ENCODE measurements at regions of chr16 and their contacts with region 1.

Region 1: DNA sequence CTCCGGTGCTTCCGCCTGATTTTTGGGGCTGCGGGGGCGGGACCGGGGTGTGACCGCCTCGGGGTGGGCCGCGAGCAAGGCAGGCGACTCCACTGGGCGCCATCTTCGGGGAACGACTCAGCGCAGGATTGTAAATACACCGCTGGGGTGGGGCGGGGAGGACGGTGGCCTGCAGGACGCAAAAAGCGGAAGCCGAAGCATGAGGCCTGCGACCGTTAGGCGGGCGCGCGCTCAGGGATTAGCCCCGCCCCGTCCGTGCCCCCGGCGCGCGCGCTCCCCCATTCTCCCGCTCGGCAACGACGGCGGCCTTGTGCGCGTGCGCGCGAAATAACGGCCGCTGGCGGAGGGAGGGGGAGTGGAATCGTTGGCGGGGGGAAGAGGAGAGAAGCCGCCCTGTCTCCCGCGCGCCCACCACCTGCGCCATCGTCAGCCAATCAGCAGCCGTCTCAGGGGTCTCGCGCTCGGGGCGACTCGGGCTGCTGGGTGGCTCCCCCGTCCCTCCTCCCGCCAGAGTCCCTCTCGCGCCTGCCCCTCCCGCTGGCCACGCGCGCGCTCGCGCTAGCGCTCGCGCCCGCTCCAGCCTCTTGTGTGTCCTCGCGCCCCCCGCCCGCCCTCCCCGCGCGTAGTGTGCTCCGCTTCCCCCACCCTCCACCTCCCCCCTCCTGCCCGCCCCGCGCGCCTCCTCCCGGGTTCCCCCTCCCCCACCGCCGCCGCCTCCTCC is 791 bp upstream of the MAZ start:
- DNase-seq: peak; percentile 97 to 99 (median 98)
- H3K4me3 ChIP-seq: peak overlapping the region; percentile 43 to 95
- H3K4me3 Mint-ChIP-seq: peak overlapping the region; percentile 99 to 100 (median 100)
- H3K27ac ChIP-seq: peak overlapping the region; percentile 86
- H3K27ac Mint-ChIP-seq: peak overlapping the region; percentile 98 to 100 (median 99)
- H3K4me1 ChIP-seq: peaks cover 46% of the 10 kb centered on the region
- H3K4me1 Mint-ChIP-seq: peaks cover 26 to 53% (median 37%) of the 10 kb centered on the region in 4 donors
- H3K27me3 ChIP-seq: no peaks in the 10 kb centered on the region
- H3K27me3 Mint-ChIP-seq: no peaks in the 10 kb centered on the region

Region 2: GRCh38 chr16:29700253-29700987 is 105.1 kb before region 1 on chr16:
- CTCF ChIA-PET with region 1: interaction called, 23 read pairs
- POLR2A ChIA-PET with region 1: interaction called, 148 read pairs
- intact Hi-C with region 1: loop called (anchors 1 kb)
- DNase-seq: peak; percentile 78 to 79 (median 79)
- H3K4me3 ChIP-seq: peak overlapping the region in 1 of 2 donors; percentile 11
- H3K4me3 Mint-ChIP-seq: peak overlapping the region; percentile 75 to 87 (median 80)
- H3K27ac ChIP-seq: peak overlapping the region; percentile 61
- H3K27ac Mint-ChIP-seq: peak overlapping the region; percentile 95 to 100 (median 98)
- H3K4me1 ChIP-seq: peaks cover 34% of the 10 kb centered on the region
- H3K4me1 Mint-ChIP-seq: peaks cover 25 to 37% (median 31%) of the 10 kb centered on the region in 4 donors
- H3K27me3 ChIP-seq: no peaks in the 10 kb centered on the region
- H3K27me3 Mint-ChIP-seq: no peaks in the 10 kb centered on the region

Region 3: DNA sequence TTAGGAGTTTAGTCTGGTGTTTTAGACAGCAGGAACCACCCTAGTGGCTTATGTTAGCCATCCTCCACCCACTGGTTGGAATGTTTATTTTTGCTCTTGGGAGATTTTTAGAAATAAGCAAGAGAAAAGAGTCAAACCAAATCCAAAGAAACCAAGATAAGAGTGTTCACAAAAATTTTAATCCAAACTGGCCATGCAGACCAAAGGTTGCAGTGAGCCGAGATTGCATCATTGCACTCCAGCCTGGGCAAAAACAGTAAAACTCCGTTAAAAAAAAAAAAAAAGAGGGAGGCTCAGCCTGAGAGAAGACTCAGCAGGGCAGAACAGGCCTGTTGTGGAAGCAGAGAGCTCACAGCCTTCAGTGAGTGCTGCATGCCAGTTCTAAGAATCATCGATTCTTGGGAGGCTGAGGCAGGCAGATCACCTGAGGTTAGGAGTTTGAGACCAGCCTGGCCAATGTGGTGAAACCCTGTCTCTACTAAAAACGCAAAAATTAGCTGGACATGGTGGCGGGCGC is 47.5 kb before region 1 on chr16:
- CTCF ChIA-PET with region 1: interaction called, 3 read pairs
- POLR2A ChIA-PET with region 1: interaction called, 11 read pairs
- intact Hi-C with region 1: no loop called
- DNase-seq: no peak
- H3K4me3 ChIP-seq: no peak overlapping the region
- H3K4me3 Mint-ChIP-seq: no peak overlapping the region
- H3K27ac ChIP-seq: no peak overlapping the region
- H3K27ac Mint-ChIP-seq: peak overlapping the region in 3 of 7 donors; percentile 6 to 75 (median 46)
- H3K4me1 ChIP-seq: peaks cover 23% of the 10 kb centered on the region
- H3K4me1 Mint-ChIP-seq: peaks cover 19 to 43% (median 27%) of the 10 kb centered on the region in 4 donors
- H3K27me3 ChIP-seq: no peaks in the 10 kb centered on the region
- H3K27me3 Mint-ChIP-seq: no peaks in the 10 kb centered on the region

Region 4: GRCh38 chr16:29775742-29776408 is 29.7 kb before region 1 on chr16:
- CTCF ChIA-PET with region 1: no interaction called
- POLR2A ChIA-PET with region 1: no interaction called
- intact Hi-C with region 1: no loop called
- DNase-seq: no peak
- H3K4me3 ChIP-seq: no peak overlapping the region
- H3K4me3 Mint-ChIP-seq: no peak overlapping the region
- H3K27ac ChIP-seq: no peak overlapping the region
- H3K27ac Mint-ChIP-seq: peak overlapping the region in 1 of 7 donors; percentile 62
- H3K4me1 ChIP-seq: no peaks in the 10 kb centered on the region
- H3K4me1 Mint-ChIP-seq: peaks cover 0 to 6% (median 3%) of the 10 kb centered on the region in 4 donors
- H3K27me3 ChIP-seq: no peaks in the 10 kb centered on the region
- H3K27me3 Mint-ChIP-seq: no peaks in the 10 kb centered on the region

Region 5: DNA sequence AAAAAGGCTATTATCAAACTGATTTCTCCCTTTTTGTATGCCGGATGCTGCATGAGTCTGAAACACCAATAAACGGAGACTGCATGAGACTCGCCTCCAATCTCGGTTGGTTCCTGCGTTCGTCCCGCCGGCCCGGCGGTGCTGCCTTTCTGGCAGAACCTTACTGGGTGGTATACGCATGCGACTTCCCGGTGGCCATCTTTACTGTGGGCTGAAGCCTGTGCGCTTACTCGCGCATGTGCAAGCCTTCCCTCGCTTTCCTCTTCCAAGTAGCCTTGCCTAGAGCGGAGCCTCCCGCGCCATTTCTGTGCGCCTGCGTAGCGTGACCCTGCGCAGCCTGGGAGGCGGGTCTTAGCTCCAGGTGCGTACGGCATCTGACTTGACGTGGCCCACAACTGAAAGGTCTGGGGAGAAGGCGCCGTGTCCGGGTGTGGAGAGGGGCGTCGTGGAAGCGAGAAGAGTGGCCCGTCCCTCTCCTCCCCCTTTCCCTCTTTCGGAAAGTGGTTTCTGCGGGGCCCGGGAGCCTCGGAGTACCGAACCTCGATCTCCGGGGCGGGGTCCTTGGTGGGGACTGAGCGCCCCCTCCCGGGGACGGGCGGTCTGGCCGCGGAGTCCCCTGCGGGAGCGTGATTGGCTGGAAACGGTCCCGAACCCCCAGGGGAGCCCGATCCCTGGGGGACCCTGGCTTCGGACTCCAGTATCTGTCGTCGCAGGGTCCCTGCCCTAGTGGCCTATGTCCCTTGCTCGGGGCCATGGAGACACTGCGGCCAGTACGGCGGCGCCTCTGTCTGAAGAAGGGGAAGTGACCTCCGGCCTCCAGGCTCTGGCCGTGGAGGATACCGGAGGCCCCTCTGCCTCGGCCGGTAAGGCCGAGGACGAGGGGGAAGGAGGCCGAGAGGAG is 10.5 kb after region 1 on chr16 and contains the start of gene PAGR1:
- CTCF ChIA-PET with region 1: interaction called, 27 read pairs
- POLR2A ChIA-PET with region 1: interaction called, 477 read pairs
- intact Hi-C with region 1: loop called (anchors 1 kb)
- DNase-seq: peak; percentile 99 to 100 (median 99)
- H3K4me3 ChIP-seq: peak within 1 kb of the TSS; percentile 91 to 95
- H3K4me3 Mint-ChIP-seq: peak within 1 kb of the TSS; percentile 95 to 99 (median 98)
- H3K27ac ChIP-seq: peak within 1 kb of the TSS; percentile 77
- H3K27ac Mint-ChIP-seq: peak within 1 kb of the TSS; percentile 94 to 100 (median 98)
- H3K4me1 ChIP-seq: peaks cover 66% of the 10 kb centered on the region
- H3K4me1 Mint-ChIP-seq: peaks cover 30 to 87% (median 56%) of the 10 kb centered on the region in 4 donors
- H3K27me3 ChIP-seq: no peaks in the 10 kb centered on the region
- H3K27me3 Mint-ChIP-seq: peaks cover 0 to 2% of the 10 kb centered on the region in 2 donors
- total RNA-seq, gene PAGR1: 43.7 to 44.9 TPM

Region 6: GRCh38 chr16:29900102-29900887 is 94.8 kb after region 1 on chr16 and contains the start of gene ASPHD1:
- CTCF ChIA-PET with region 1: no interaction called
- POLR2A ChIA-PET with region 1: interaction called, 11 read pairs
- intact Hi-C with region 1: no loop called
- DNase-seq: peak; percentile 74 to 88 (median 80)
- H3K4me3 ChIP-seq: peak within 1 kb of the TSS in 1 of 2 donors; percentile 45
- H3K4me3 Mint-ChIP-seq: peak within 1 kb of the TSS; percentile 47 to 83 (median 72)
- H3K27ac ChIP-seq: no peak within 1 kb of the TSS
- H3K27ac Mint-ChIP-seq: peak within 1 kb of the TSS in 3 of 7 donors; percentile 30 to 41 (median 30)
- H3K4me1 ChIP-seq: peaks cover 15% of the 10 kb centered on the region
- H3K4me1 Mint-ChIP-seq: peaks cover 0 to 5% (median 3%) of the 10 kb centered on the region in 4 donors
- H3K27me3 ChIP-seq: peaks cover 10% of the 10 kb centered on the region
- H3K27me3 Mint-ChIP-seq: peaks cover 18 to 24% of the 10 kb centered on the region in 2 donors
- total RNA-seq, gene ASPHD1: not detected

Region 7: DNA sequence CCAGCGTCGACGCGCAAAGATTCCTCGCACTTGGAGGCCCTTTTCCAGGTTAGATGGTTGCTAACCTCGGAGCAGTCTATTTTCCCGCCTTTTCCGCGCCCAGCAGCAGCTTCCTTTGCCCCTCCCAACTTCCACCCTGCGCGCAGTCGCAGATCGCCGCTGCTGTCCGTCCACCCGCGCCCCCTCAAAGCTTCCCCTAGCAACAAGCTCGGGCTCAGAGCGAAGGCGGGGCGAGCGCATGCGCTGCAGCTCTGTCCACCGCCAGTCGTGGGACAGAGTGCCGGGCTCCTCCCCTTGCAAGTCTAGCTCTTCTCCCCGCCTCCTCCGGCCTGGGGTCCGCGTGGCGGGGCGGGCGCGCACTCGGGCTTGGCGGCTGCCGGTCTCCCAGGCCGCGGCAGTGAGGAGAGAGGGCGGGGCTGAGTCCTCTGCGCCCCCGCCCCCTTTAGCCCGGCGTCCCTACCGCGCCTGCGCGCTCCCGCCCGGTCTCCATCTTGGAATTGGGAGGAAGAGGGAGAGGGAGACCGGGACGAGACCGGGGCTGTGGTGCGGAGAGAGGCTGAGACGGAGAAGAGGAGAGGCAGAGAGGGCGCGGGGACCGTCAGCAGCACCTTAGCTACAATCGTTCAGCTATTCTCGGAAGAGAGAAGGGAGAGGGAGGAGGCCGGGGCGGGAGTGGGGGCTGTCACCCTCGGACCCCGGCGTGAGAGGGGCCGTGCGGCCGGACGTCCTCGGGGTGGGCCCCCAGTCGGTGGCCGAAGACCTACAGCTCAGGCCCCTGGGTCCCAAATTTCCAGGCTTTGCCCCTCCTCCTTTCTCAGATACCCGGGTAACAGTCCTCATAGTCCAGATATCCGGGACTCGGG is 168.1 kb after region 1 on chr16 and contains the start of gene TAOK2:
- CTCF ChIA-PET with region 1: interaction called, 4 read pairs
- POLR2A ChIA-PET with region 1: interaction called, 15 read pairs
- intact Hi-C with region 1: no loop called
- DNase-seq: peak; percentile 92 to 94 (median 92)
- H3K4me3 ChIP-seq: peak within 1 kb of the TSS; percentile 74 to 87
- H3K4me3 Mint-ChIP-seq: peak within 1 kb of the TSS; percentile 82 to 97 (median 93)
- H3K27ac ChIP-seq: peak within 1 kb of the TSS; percentile 86
- H3K27ac Mint-ChIP-seq: peak within 1 kb of the TSS; percentile 77 to 97 (median 96)
- H3K4me1 ChIP-seq: peaks cover 36% of the 10 kb centered on the region
- H3K4me1 Mint-ChIP-seq: peaks cover 20 to 49% (median 34%) of the 10 kb centered on the region in 4 donors
- H3K27me3 ChIP-seq: no peaks in the 10 kb centered on the region
- H3K27me3 Mint-ChIP-seq: no peaks in the 10 kb centered on the region
- total RNA-seq, gene TAOK2: 53.8 to 56.0 TPM

Region 8: DNA sequence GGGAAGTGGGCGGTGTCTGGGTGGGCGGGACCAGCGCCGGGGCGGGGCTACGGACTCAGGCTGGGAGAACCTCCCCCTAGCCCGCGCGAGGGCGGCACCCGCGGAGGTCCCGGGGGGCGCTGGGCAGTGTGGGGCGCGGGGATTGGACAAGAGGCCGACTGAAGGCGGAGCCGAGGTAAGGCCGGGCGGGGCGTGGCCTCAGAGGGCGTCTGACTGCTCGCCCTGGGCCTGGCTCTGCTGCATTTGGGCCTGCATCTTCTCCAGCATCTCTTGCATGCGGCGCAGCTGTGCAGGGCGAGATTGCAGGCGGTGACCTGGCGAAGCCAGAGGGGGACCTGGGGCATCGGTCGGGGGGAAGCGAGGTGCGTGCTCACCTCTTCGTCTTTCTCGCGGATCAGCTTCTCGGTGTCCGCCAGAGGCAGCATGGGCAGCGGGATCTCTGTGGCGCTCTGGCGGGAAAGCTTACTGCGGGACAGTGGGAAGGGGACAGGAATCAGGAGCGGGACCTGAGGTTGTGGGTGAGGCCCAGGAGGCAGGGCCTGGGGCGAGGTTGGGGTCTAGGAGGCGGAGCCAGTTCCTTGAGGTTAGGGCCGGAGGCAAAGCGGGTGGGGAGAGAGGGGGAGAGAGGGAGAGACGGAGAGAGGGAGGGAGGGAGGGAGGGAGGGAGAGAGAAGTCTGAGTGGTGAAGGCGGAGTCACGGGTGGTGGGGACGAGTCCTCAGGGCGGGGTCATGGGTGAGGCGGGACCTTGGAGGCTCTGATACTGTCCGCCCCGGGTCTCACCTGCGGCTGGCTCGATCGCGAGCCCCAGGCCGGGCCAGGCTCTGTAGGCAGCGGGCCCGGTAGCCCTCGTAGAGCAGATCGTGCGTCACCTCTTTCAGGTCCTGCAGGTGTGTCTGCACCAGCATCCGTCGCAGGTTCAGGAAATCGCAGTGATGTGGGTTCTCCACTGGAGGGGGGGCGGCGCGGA is 573.0 kb after region 1 on chr16:
- CTCF ChIA-PET with region 1: no interaction called
- POLR2A ChIA-PET with region 1: no interaction called
- intact Hi-C with region 1: loop called (anchors 5 kb)
- DNase-seq: peak; percentile 98 to 99 (median 99)
- H3K4me3 ChIP-seq: peak overlapping the region; percentile 84 to 91
- H3K4me3 Mint-ChIP-seq: peak overlapping the region; percentile 91 to 100 (median 96)
- H3K27ac ChIP-seq: peak overlapping the region; percentile 96
- H3K27ac Mint-ChIP-seq: peak overlapping the region; percentile 97 to 100 (median 100)
- H3K4me1 ChIP-seq: peaks cover 69% of the 10 kb centered on the region
- H3K4me1 Mint-ChIP-seq: peaks cover 32 to 71% (median 48%) of the 10 kb centered on the region in 4 donors
- H3K27me3 ChIP-seq: no peaks in the 10 kb centered on the region
- H3K27me3 Mint-ChIP-seq: no peaks in the 10 kb centered on the region